ENCODE measurements at regions of chr4 and their contacts with region 1.

Region 1: GRCh38 chr4:78056265-78057129 is 626 bp upstream of the FRAS1 start:
- DNase-seq: no peak
- ATAC-seq: peak; percentile 82
- H3K4me3 ChIP-seq: peak overlapping the region; percentile 63
- H3K27ac ChIP-seq: no peak overlapping the region
- H3K4me1 ChIP-seq: peaks cover 12% of the 10 kb centered on the region; the same call in 1 of the 2 replicates
- H3K27me3 ChIP-seq: peaks cover 0 to 35% of the 10 kb centered on the region in 2 experiments; a peak in 3 of 4 replicates
- CTCF ChIP-seq: no peak
- EP300 ChIP-seq: no peak
- POLR2A ChIP-seq: no peak
- RAD21 ChIP-seq: no peak

Region 2: DNA sequence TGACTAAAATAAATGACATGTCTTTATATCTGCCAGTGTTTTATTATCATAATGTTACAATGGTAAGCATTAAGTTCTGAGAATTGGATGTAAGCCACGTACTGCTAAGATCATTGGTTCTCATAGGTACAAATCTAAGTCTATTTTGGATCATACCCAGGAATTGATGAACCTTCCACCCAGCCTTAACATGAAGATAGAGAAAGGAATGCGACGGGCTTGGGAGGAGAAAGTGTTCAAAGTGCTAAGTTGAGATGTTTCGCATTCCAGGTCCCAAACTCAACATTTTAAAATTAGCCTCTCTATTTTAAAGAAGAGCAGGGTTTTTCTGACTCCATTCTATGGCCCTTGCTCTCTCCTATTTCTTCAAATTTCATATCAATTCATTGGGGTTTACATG is 54.2 kb before region 1 on chr4:
- CTCF ChIA-PET with region 1: no interaction called
- POLR2A ChIA-PET with region 1: no interaction called
- RAD21 ChIA-PET with region 1: no interaction called
- SMC1A ChIA-PET with region 1: no interaction called
- in situ Hi-C with region 1: no loop called
- intact Hi-C with region 1: no loop called
- DNase-seq: no peak
- ATAC-seq: no peak
- H3K4me3 ChIP-seq: no peak overlapping the region
- H3K27ac ChIP-seq: no peak overlapping the region
- H3K4me1 ChIP-seq: no peaks in the 10 kb centered on the region
- H3K27me3 ChIP-seq: no peaks in the 10 kb centered on the region; a peak in 1 of 4 replicates
- CTCF ChIP-seq: no peak
- EP300 ChIP-seq: no peak
- POLR2A ChIP-seq: no peak
- RAD21 ChIP-seq: no peak

Region 3: GRCh38 chr4:78079726-78080430 is 23.4 kb after region 1 on chr4:
- CTCF ChIA-PET with region 1: interaction called, 16 read pairs
- POLR2A ChIA-PET with region 1: no interaction called
- RAD21 ChIA-PET with region 1: interaction called, 11 read pairs
- SMC1A ChIA-PET with region 1: interaction called, 7 read pairs
- in situ Hi-C with region 1: no loop called
- intact Hi-C with region 1: no loop called
- DNase-seq: no peak
- ATAC-seq: peak; percentile 71
- H3K4me3 ChIP-seq: no peak overlapping the region
- H3K27ac ChIP-seq: no peak overlapping the region
- H3K4me1 ChIP-seq: no peaks in the 10 kb centered on the region
- H3K27me3 ChIP-seq: no peaks in the 10 kb centered on the region
- CTCF ChIP-seq: no peak
- EP300 ChIP-seq: no peak
- POLR2A ChIP-seq: no peak
- RAD21 ChIP-seq: no peak

Region 4: GRCh38 chr4:78166637-78167036 is 110.1 kb after region 1 on chr4:
- CTCF ChIA-PET with region 1: interaction called, 30 read pairs
- POLR2A ChIA-PET with region 1: interaction called, 4 read pairs
- RAD21 ChIA-PET with region 1: interaction called, 26 read pairs
- SMC1A ChIA-PET with region 1: interaction called, 25 read pairs
- in situ Hi-C with region 1: no loop called
- intact Hi-C with region 1: no loop called
- DNase-seq: no peak
- ATAC-seq: peak; percentile 79
- H3K4me3 ChIP-seq: no peak overlapping the region
- H3K27ac ChIP-seq: no peak overlapping the region
- H3K4me1 ChIP-seq: no peaks in the 10 kb centered on the region
- H3K27me3 ChIP-seq: no peaks in the 10 kb centered on the region
- CTCF ChIP-seq: no peak
- EP300 ChIP-seq: no peak
- POLR2A ChIP-seq: no peak
- RAD21 ChIP-seq: no peak

Region 5: DNA sequence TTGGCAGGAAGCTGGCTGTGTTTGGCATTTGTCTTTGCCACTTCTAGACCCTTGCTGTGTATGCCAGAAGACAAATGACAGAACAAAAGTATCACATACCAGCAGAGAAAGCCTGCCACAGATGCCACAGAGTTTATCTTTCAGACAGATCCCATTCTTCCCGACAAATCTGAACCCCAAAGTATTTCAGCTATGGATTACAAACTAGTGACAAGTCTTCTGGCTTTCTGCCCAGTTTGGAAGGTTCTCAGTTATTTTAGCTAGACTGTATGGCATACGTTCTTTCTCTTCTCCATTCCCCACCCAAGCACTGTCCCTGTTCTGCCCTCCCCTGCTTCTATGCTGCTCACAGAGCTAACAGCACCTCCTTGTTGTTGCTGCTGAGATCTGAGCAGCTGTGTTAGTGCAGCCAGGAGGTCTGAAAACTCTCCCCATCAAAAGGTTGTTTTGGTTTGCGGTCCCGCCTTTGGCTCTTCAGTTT is 237.4 kb after region 1 on chr4:
- CTCF ChIA-PET with region 1: interaction called, 15 read pairs
- POLR2A ChIA-PET with region 1: no interaction called
- RAD21 ChIA-PET with region 1: interaction called, 13 read pairs
- SMC1A ChIA-PET with region 1: interaction called, 30 read pairs
- in situ Hi-C with region 1: no loop called
- intact Hi-C with region 1: no loop called
- DNase-seq: no peak
- ATAC-seq: no peak
- H3K4me3 ChIP-seq: no peak overlapping the region
- H3K27ac ChIP-seq: no peak overlapping the region
- H3K4me1 ChIP-seq: peaks cover 8% of the 10 kb centered on the region; the same call in 1 of the 2 replicates
- H3K27me3 ChIP-seq: no peaks in the 10 kb centered on the region
- CTCF ChIP-seq: no peak
- EP300 ChIP-seq: no peak
- POLR2A ChIP-seq: no peak
- RAD21 ChIP-seq: no peak

Region 6: GRCh38 chr4:78569291-78569821 is 512.9 kb after region 1 on chr4:
- CTCF ChIA-PET with region 1: interaction called, 4 read pairs
- POLR2A ChIA-PET with region 1: no interaction called
- RAD21 ChIA-PET with region 1: interaction called, 22 read pairs
- SMC1A ChIA-PET with region 1: interaction called, 22 read pairs
- in situ Hi-C with region 1: no loop called
- intact Hi-C with region 1: loop called (anchors 10 kb)
- DNase-seq: no peak
- ATAC-seq: no peak
- H3K4me3 ChIP-seq: no peak overlapping the region
- H3K27ac ChIP-seq: no peak overlapping the region
- H3K4me1 ChIP-seq: peaks cover 6% of the 10 kb centered on the region
- H3K27me3 ChIP-seq: no peaks in the 10 kb centered on the region
- CTCF ChIP-seq: no peak
- EP300 ChIP-seq: no peak
- POLR2A ChIP-seq: no peak
- RAD21 ChIP-seq: no peak

Measured in GM12878 (cell line).